ENCODE measurements at regions of chr12 and their contacts with region 1.

Region 1: GRCh38 chr12:62799126-62799736 is 135.7 kb downstream of the PPM1H start:
- DNase-seq: peak; percentile 52 to 54
- H3K4me3 ChIP-seq: no peak overlapping the region
- H3K27ac ChIP-seq: no peak overlapping the region
- H3K4me1 ChIP-seq: peaks cover 13% of the 10 kb centered on the region
- H3K27me3 ChIP-seq: no peaks in the 10 kb centered on the region
- CTCF ChIP-seq: peak; percentile 97

Region 2: GRCh38 chr12:62581288-62582064 is 217.8 kb before region 1 on chr12:
- CTCF ChIA-PET with region 1: interaction called, 7 read pairs
- POLR2A ChIA-PET with region 1: no interaction called
- intact Hi-C with region 1: loop called (anchors 1 kb)
- DNase-seq: peak in 1 of 2 experiments; percentile 45
- H3K4me3 ChIP-seq: no peak overlapping the region
- H3K27ac ChIP-seq: no peak overlapping the region
- H3K4me1 ChIP-seq: no peaks in the 10 kb centered on the region
- H3K27me3 ChIP-seq: no peaks in the 10 kb centered on the region
- CTCF ChIP-seq: peak; percentile 80

Region 3: DNA sequence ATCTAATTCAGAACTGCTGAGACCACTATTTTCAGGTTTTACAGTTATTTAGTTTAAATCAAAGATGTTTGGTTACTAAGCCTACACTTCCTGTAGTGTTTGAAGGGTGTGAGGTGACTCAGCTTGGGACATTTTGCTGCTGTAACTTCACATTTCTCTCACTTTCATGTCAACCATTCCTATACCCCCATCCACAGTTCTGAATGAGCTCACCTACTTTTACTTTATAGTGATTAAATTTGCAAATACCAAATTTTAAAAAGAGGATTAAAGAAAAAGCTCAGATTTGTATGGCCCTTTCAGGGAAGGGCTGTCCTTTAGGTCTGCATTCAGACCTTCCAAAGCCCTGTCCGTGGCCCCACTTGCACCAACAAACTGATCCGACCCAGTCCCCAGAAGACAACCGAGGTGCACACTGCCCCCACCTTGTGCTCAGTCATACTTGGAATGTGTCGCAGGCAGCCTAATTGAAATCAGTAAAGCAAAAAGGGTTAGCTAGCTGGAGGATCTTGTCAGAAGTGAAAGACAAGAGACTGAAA is 158.3 kb before region 1 on chr12:
- CTCF ChIA-PET with region 1: no interaction called
- POLR2A ChIA-PET with region 1: no interaction called
- intact Hi-C with region 1: no loop called
- DNase-seq: no peak
- H3K4me3 ChIP-seq: no peak overlapping the region
- H3K27ac ChIP-seq: 0 out of 2 replicates have a peak overlapping the region, but pooled peaks have one; percentile 7
- H3K4me1 ChIP-seq: peaks cover 14% of the 10 kb centered on the region
- H3K27me3 ChIP-seq: no peaks in the 10 kb centered on the region
- CTCF ChIP-seq: no peak

Measured in PC-9 (cell line).